OCI-LY7 (cell line): ENCODE measurements at regions of chr7 and their contacts with region 1.

Region 1: DNA sequence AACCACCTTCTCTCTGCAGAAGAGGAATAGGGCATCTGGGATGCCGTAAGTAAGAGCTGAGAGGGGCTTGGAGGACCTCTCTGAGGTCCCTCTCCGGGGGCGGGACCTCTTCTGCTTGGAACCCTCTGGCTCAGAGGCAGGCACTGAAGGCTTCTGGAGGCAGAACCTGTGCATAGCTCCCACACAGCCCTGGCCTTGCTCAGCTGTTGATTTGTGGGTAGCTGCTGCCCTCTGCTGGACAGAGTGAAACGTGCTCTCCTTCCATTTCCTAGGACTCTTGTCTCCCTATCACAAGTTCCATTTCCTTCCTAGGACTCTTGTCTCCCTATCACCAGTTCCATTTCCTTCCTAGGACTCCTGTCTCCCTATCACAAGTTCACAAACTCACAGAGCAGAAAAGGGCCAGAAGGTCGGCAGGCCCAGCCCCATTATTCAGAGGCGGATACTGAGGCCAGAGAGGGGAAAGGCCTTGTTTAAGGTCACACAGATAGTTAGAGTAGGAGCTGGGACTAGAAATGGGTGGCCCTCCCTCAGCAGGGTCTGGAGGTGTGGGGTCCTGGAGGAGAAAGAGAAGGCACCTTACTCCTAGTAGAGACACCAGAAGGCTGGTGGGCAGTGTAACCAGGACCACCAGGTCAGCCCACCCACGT is 30.3 kb upstream of the GARS1 start:
- DNase-seq: peak; percentile 86
- H3K4me3 ChIP-seq: no peak overlapping the region
- H3K27ac ChIP-seq: no peak overlapping the region
- H3K4me1 ChIP-seq: no peaks in the 10 kb centered on the region
- CTCF ChIP-seq: peak; percentile 91

Region 2: DNA sequence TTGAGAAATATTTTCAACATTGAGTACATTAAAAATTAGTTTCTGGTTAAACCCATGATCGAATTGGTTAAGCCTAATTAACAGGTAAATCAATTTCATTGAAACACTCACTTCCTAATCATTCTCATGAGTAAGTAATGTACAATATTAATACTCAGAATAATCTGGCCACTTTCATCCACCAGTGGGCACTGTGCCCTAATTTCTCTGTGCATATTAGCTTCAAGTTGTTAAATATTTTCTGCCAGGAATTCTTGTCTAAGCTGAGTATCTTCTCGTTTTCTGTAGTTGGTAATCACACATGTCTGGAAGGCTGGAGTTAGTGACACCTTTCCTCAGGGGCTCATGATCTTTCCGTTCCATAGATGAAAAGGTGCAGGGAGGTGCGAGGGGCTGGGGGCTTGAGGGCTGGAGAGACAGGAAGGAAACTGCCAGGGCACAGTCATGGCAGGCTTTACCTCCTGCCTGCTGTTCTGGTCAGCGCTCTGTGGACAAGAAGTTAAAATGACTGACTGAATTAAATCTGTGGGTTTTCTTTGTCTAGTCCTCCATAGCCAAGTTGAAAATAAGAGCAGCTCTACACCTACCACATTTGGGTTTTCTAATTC is 686.2 kb before region 1 on chr7:
- CTCF ChIA-PET with region 1: no interaction called
- POLR2A ChIA-PET with region 1: no interaction called
- intact Hi-C with region 1: loop called (anchors 5 kb)
- DNase-seq: peak; percentile 55
- H3K4me3 ChIP-seq: no peak overlapping the region
- H3K27ac ChIP-seq: no peak overlapping the region
- H3K4me1 ChIP-seq: no peaks in the 10 kb centered on the region
- CTCF ChIP-seq: peak; percentile 91

Region 3: DNA sequence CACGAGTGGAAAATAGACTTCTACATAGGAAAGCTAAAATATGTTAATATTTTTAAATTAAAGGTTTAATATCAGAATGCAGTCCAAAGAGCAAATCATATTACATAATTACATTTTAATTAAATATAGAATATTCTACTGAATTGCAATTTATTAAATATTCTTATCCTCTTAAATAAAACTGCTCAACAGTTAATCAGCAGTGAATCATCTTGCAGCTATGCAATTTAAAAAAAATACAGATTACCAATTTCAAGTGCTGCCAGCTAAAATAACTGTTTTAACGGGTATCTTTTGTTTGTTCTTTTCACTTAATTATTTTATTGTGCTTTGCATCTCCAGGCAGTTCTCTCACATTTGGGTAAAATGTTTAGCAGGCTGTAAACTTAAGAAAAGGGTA is 197.8 kb before region 1 on chr7:
- CTCF ChIA-PET with region 1: no interaction called
- POLR2A ChIA-PET with region 1: no interaction called
- intact Hi-C with region 1: loop called (anchors 10 kb)
- DNase-seq: no peak
- H3K4me3 ChIP-seq: no peak overlapping the region
- H3K27ac ChIP-seq: no peak overlapping the region
- H3K4me1 ChIP-seq: peaks cover 8% of the 10 kb centered on the region
- CTCF ChIP-seq: no peak

Region 4: DNA sequence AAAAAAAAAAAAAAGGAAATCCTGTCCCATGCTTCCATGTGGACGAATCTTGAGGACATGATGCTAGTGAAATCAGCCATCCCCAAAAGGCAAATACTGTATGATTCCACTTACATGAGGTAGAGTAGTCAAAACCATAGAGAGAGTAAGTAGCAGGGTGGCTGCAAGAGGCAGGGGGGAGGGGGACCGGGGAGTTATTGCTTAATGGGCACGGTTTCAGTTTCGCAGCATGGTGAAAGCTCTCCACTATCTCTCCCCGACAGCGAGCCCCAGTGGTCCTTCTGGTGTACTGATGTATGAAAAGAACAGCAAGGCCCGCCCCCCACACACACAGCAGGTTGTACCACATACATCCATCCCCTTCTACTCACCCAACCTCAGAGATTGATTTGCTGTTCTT is 118.6 kb before region 1 on chr7:
- CTCF ChIA-PET with region 1: no interaction called
- POLR2A ChIA-PET with region 1: no interaction called
- intact Hi-C with region 1: loop called (anchors 5 kb)
- DNase-seq: peak; percentile 93
- H3K4me3 ChIP-seq: no peak overlapping the region
- H3K27ac ChIP-seq: no peak overlapping the region
- H3K4me1 ChIP-seq: peaks cover 11% of the 10 kb centered on the region
- CTCF ChIP-seq: peak; percentile 78

Region 5: DNA sequence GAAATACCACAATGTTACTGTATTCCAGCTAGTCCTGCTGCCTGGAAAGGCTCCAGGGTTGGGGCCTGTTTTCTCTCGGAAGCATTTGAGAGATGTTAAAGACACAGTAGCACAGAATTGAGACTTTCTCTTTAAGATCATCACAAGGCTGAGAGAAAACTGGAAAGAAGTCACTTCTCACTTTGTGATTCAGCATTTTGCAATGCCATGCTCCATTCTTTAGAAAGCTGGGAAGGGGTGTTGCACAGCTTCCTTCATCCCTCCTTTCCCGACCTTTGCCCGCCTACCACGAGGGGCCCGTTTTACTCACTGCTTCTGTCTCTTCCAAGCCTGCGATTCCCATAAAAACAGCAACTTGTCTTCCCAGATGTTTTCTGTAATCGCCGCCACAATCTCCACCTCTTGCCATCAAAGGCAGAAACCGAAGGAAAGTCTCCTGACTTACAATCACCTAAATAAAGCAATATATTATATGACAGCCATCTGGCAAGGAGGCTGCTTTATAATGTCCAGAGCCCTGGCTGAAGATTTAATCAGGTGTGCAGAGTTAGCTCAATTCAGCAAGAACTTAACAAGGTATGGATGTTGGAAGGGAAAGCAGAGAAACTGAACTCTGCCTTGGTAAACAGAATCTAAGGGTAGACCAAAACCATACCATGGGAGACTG is 104.6 kb before region 1 on chr7:
- CTCF ChIA-PET with region 1: no interaction called
- POLR2A ChIA-PET with region 1: no interaction called
- intact Hi-C with region 1: no loop called
- DNase-seq: no peak
- H3K4me3 ChIP-seq: no peak overlapping the region
- H3K27ac ChIP-seq: no peak overlapping the region
- H3K4me1 ChIP-seq: peaks cover 19% of the 10 kb centered on the region
- CTCF ChIP-seq: no peak

Region 6: GRCh38 chr7:30548762-30549344 is 15.5 kb before region 1 on chr7:
- CTCF ChIA-PET with region 1: interaction called, 8 read pairs
- POLR2A ChIA-PET with region 1: interaction called, 3 read pairs
- intact Hi-C with region 1: loop called (anchors 1 kb)
- DNase-seq: peak; percentile 61
- H3K4me3 ChIP-seq: no peak overlapping the region
- H3K27ac ChIP-seq: no peak overlapping the region
- H3K4me1 ChIP-seq: peaks cover 43% of the 10 kb centered on the region
- CTCF ChIP-seq: peak; percentile 91